GM10248 (cell line): ENCODE measurements at regions of chr3 and their contacts with region 1.

Region 1: GRCh38 chr3:73056014-73056844 is 5.2 kb upstream of the EBLN2 start:
- DNase-seq: peak; percentile 26
- CTCF ChIP-seq: peak; percentile 49

Region 2: DNA sequence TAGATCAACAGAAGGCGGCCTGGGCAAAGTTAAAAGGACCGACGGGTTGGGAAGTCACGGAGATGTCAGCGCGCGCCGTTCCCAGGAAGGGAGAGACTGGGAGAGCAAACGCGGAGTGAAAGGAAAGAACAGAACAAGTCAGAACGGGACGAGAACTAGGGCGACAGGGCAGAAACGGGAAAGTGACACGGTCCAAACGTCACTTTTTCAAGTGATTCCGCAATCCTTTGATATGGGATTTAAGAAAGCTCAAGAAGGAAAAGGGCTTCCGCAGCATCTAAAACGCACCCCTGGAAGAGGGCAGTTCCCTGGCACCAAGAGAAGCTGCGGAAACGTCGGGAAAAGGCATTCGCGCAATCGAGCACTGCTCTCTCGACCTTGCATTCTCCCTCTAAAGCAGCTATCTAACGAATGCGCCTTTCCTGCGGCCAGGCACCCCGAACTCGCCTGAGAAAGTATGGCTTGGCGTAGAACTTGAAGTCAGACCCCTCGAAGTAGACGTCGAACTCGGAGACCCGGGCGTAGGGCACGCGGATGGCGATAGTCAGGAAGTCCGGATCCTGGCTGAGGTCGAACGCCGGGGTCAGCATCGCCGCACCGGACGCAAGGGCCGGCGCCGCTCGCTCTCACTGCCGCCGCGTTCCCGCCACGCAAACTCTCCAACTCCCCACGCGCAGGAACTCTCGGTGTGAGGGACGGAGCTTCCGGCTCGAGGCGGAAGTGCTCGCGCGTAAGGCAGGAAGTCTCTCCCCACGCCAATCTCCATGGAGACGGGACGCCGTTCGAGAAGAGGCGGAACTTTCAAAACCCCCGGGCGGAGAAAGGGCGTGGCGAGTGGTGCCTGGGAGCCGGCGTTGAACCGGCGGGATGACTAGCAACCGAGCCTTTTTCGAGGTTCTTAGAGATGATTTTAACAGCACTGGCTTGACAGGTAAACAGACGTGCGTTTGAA is 208.2 kb before region 1 on chr3 and contains the start of gene SHQ1:
- CTCF ChIA-PET with region 1: interaction called, 28 read pairs
- POLR2A ChIA-PET with region 1: no interaction called
- DNase-seq: peak; percentile 92
- CTCF ChIP-seq: no peak

Region 3: GRCh38 chr3:72938471-72939265 is 117.6 kb before region 1 on chr3:
- CTCF ChIA-PET with region 1: interaction called, 74 read pairs
- POLR2A ChIA-PET with region 1: no interaction called
- DNase-seq: peak; percentile 69
- CTCF ChIP-seq: peak; percentile 22

Region 4: GRCh38 chr3:72951259-72951722 is 104.9 kb before region 1 on chr3:
- CTCF ChIA-PET with region 1: interaction called, 21 read pairs
- POLR2A ChIA-PET with region 1: no interaction called
- DNase-seq: peak; percentile 24
- CTCF ChIP-seq: no peak

Region 5: GRCh38 chr3:73024836-73025235 is 31.4 kb before region 1 on chr3:
- CTCF ChIA-PET with region 1: interaction called, 12 read pairs
- POLR2A ChIA-PET with region 1: no interaction called
- DNase-seq: no peak
- CTCF ChIP-seq: no peak

Region 6: DNA sequence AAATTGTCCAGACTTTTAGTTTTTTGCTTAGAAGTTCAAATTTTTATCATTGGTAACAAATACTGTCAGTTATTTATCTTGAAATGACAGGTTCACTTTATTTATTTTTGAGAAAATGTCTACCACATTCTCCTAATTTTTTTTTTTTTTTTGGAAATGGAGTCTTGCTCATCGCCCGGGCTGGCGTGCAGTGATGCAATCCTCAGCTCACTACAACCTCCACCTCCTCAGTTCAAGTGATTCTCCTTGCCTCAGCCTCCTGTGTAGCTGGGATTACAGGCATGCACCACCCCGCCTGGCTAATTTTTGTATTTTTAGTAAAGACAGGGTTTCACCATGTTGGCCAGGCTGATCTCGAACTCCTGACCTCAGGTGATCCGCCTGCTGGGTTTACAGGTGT is 10.8 kb before region 1 on chr3:
- CTCF ChIA-PET with region 1: interaction called, 27 read pairs
- POLR2A ChIA-PET with region 1: no interaction called
- DNase-seq: no peak
- CTCF ChIP-seq: no peak

Region 7: GRCh38 chr3:73461547-73461946 is 405.3 kb after region 1 on chr3:
- CTCF ChIA-PET with region 1: no interaction called
- POLR2A ChIA-PET with region 1: no interaction called
- DNase-seq: no peak
- CTCF ChIP-seq: no peak